ENCODE measurements at regions of chr18 and their contacts with region 1.

Region 1: DNA sequence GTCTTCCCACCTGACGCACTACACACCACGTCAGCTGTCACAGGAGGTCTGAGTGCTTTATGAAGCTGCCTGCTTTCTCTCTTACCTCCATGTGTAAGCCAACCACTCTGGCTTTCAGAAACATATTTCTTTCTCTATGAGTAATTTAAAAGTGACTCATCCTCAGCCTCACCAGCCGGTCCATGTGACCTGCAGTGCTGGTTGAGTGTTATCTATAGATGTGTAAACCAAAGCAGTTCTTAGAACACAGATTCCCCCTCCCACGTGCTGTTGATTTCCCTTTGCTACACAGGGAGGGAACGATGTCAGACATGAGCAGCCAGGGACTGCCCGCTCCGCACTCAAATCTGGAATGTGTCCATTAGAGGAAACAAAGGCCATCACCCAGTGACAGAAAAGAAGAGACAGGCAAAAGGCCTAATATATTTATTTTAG is 157.8 kb downstream of the BCL2 start:
- DNase-seq: peak; percentile 79 to 97 (median 86)
- H3K4me3 ChIP-seq: peak overlapping the region; percentile 37 to 38
- H3K4me3 Mint-ChIP-seq: peak overlapping the region; percentile 68 to 93 (median 90)
- H3K27ac ChIP-seq: peak overlapping the region; percentile 97
- H3K27ac Mint-ChIP-seq: peak overlapping the region; percentile 93 to 100 (median 99)
- H3K4me1 ChIP-seq: peaks cover 90% of the 10 kb centered on the region
- H3K4me1 Mint-ChIP-seq: peaks cover 77 to 96% (median 85%) of the 10 kb centered on the region in 4 donors
- H3K27me3 ChIP-seq: no peaks in the 10 kb centered on the region
- H3K27me3 Mint-ChIP-seq: no peaks in the 10 kb centered on the region

Region 2: GRCh38 chr18:63138436-63139340 is 23.1 kb before region 1 on chr18:
- CTCF ChIA-PET with region 1: interaction called, 148 read pairs
- POLR2A ChIA-PET with region 1: interaction called, 54 read pairs
- intact Hi-C with region 1: no loop called
- DNase-seq: no peak
- H3K4me3 ChIP-seq: peak overlapping the region; percentile 23 to 53
- H3K4me3 Mint-ChIP-seq: peak overlapping the region; percentile 82 to 92 (median 88)
- H3K27ac ChIP-seq: peak overlapping the region; percentile 32
- H3K27ac Mint-ChIP-seq: peak overlapping the region; percentile 76 to 96 (median 94)
- H3K4me1 ChIP-seq: peaks cover 70% of the 10 kb centered on the region
- H3K4me1 Mint-ChIP-seq: peaks cover 57 to 90% (median 73%) of the 10 kb centered on the region in 4 donors
- H3K27me3 ChIP-seq: no peaks in the 10 kb centered on the region
- H3K27me3 Mint-ChIP-seq: no peaks in the 10 kb centered on the region

Region 3: GRCh38 chr18:63186520-63187222 is 24.9 kb after region 1 on chr18:
- CTCF ChIA-PET with region 1: interaction called, 4 read pairs
- POLR2A ChIA-PET with region 1: interaction called, 12 read pairs
- intact Hi-C with region 1: no loop called
- DNase-seq: no peak
- H3K4me3 ChIP-seq: no peak overlapping the region
- H3K4me3 Mint-ChIP-seq: peak overlapping the region in 4 of 8 donors; percentile 1 to 68 (median 4)
- H3K27ac ChIP-seq: peak overlapping the region; percentile 1
- H3K27ac Mint-ChIP-seq: peak overlapping the region in 6 of 7 donors; percentile 3 to 88 (median 32)
- H3K4me1 ChIP-seq: peaks cover 63% of the 10 kb centered on the region
- H3K4me1 Mint-ChIP-seq: peaks cover 53 to 87% (median 69%) of the 10 kb centered on the region in 4 donors
- H3K27me3 ChIP-seq: no peaks in the 10 kb centered on the region
- H3K27me3 Mint-ChIP-seq: no peaks in the 10 kb centered on the region

Region 4: GRCh38 chr18:63207143-63207790 is 45.5 kb after region 1 on chr18:
- CTCF ChIA-PET with region 1: interaction called, 9 read pairs
- POLR2A ChIA-PET with region 1: interaction called, 31 read pairs
- intact Hi-C with region 1: no loop called
- DNase-seq: no peak
- H3K4me3 ChIP-seq: peak overlapping the region in 1 of 2 donors; percentile 7
- H3K4me3 Mint-ChIP-seq: peak overlapping the region; percentile 70 to 89 (median 84)
- H3K27ac ChIP-seq: peak overlapping the region; percentile 46
- H3K27ac Mint-ChIP-seq: peak overlapping the region; percentile 81 to 97 (median 89)
- H3K4me1 ChIP-seq: peaks cover 100% of the 10 kb centered on the region
- H3K4me1 Mint-ChIP-seq: peaks cover 79 to 97% (median 90%) of the 10 kb centered on the region in 4 donors
- H3K27me3 ChIP-seq: no peaks in the 10 kb centered on the region
- H3K27me3 Mint-ChIP-seq: no peaks in the 10 kb centered on the region

Region 5: DNA sequence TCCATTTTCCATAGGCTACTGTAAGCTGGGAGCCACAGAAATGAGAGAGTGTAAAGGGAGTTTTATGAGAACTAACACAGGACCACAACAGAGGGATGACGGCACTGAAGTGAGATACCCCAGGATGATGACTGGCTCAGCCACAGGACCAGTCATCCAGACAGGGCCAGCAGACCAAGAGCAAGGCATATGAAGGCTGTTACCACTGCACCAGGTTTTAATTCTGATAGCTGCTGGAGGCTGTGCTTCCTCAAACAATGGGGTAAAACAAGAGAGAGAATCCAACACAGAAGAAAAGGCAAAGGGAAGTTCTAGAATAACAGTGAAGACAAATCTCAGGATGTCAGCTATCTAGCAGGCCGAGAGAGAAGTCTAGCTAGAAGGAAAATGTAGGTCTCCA is 62.9 kb after region 1 on chr18:
- CTCF ChIA-PET with region 1: no interaction called
- POLR2A ChIA-PET with region 1: interaction called, 15 read pairs
- intact Hi-C with region 1: no loop called
- DNase-seq: peak in 1 of 5 donors; percentile 66
- H3K4me3 ChIP-seq: no peak overlapping the region
- H3K4me3 Mint-ChIP-seq: peak overlapping the region in 5 of 8 donors; percentile 13 to 79 (median 58)
- H3K27ac ChIP-seq: peak overlapping the region; percentile 27
- H3K27ac Mint-ChIP-seq: peak overlapping the region; percentile 39 to 92 (median 78)
- H3K4me1 ChIP-seq: peaks cover 84% of the 10 kb centered on the region
- H3K4me1 Mint-ChIP-seq: peaks cover 56 to 94% (median 82%) of the 10 kb centered on the region in 4 donors
- H3K27me3 ChIP-seq: no peaks in the 10 kb centered on the region
- H3K27me3 Mint-ChIP-seq: no peaks in the 10 kb centered on the region

Region 6: GRCh38 chr18:63299837-63300745 is 138.3 kb after region 1 on chr18:
- CTCF ChIA-PET with region 1: interaction called, 23 read pairs
- POLR2A ChIA-PET with region 1: interaction called, 24 read pairs
- intact Hi-C with region 1: no loop called
- DNase-seq: peak in 2 of 5 donors; percentile 21 to 53
- H3K4me3 ChIP-seq: no peak overlapping the region
- H3K4me3 Mint-ChIP-seq: peak overlapping the region; percentile 20 to 87 (median 76)
- H3K27ac ChIP-seq: peak overlapping the region; percentile 22
- H3K27ac Mint-ChIP-seq: peak overlapping the region; percentile 87 to 96 (median 93)
- H3K4me1 ChIP-seq: peaks cover 90% of the 10 kb centered on the region
- H3K4me1 Mint-ChIP-seq: peaks cover 64 to 92% (median 73%) of the 10 kb centered on the region in 4 donors
- H3K27me3 ChIP-seq: no peaks in the 10 kb centered on the region
- H3K27me3 Mint-ChIP-seq: no peaks in the 10 kb centered on the region

Region 7: GRCh38 chr18:63823518-63824219 is 661.9 kb after region 1 on chr18:
- CTCF ChIA-PET with region 1: no interaction called
- POLR2A ChIA-PET with region 1: no interaction called
- intact Hi-C with region 1: no loop called
- DNase-seq: peak in 1 of 5 donors; percentile 3
- H3K4me3 ChIP-seq: no peak overlapping the region
- H3K4me3 Mint-ChIP-seq: no peak overlapping the region
- H3K27ac ChIP-seq: no peak overlapping the region
- H3K27ac Mint-ChIP-seq: no peak overlapping the region
- H3K4me1 ChIP-seq: no peaks in the 10 kb centered on the region
- H3K4me1 Mint-ChIP-seq: no peaks in the 10 kb centered on the region
- H3K27me3 ChIP-seq: no peaks in the 10 kb centered on the region
- H3K27me3 Mint-ChIP-seq: peaks cover 6 to 11% of the 10 kb centered on the region in 2 donors